Esophagus muscularis mucosa (tissue), 4 donors: ENCODE measurements at regions of chr18 and their contacts with region 1.

Region 1: DNA sequence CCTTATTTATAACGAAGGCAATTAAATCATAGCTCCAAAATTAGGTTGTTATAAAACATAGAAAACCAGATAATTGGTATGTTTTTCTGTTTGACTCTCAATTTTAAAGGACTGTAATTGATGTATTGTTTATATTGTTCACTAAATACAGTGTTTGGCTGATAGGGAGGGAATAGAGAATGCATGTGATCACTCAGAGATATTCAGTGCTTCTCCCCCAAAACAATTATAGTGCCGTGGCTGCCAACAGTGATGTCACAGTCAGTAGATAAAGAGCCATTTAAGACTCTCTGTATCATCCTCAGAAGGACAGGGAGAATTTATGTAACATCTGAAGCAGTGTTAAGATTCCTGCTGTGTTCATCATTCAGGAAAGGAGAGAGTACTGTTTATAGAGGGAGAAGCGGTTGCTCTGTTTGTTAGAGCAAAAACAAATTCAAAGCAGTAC is 69.6 kb downstream of the PHLPP1 start:
- DNase-seq: no peak
- H3K4me3 ChIP-seq: peak overlapping the region in 1 of 4 donors; percentile 5
- H3K27ac ChIP-seq: peak overlapping the region; percentile 52 to 64 (median 58)
- H3K4me1 ChIP-seq: peaks cover 3 to 82% (median 61%) of the 10 kb centered on the region in 4 donors
- H3K27me3 ChIP-seq: no peaks in the 10 kb centered on the region
- CTCF ChIP-seq: no peak
- EP300 ChIP-seq: no peak
- POLR2A ChIP-seq: no peak

Region 2: GRCh38 chr18:62545098-62545497 is 239.9 kb before region 1 on chr18:
- intact Hi-C with region 1: no loop called
- DNase-seq: no peak
- H3K4me3 ChIP-seq: no peak overlapping the region
- H3K27ac ChIP-seq: no peak overlapping the region
- H3K4me1 ChIP-seq: peaks cover 0 to under 1% (median 0%) of the 10 kb centered on the region in 4 donors
- H3K27me3 ChIP-seq: no peaks in the 10 kb centered on the region
- CTCF ChIP-seq: no peak
- EP300 ChIP-seq: no peak
- POLR2A ChIP-seq: no peak

Region 3: DNA sequence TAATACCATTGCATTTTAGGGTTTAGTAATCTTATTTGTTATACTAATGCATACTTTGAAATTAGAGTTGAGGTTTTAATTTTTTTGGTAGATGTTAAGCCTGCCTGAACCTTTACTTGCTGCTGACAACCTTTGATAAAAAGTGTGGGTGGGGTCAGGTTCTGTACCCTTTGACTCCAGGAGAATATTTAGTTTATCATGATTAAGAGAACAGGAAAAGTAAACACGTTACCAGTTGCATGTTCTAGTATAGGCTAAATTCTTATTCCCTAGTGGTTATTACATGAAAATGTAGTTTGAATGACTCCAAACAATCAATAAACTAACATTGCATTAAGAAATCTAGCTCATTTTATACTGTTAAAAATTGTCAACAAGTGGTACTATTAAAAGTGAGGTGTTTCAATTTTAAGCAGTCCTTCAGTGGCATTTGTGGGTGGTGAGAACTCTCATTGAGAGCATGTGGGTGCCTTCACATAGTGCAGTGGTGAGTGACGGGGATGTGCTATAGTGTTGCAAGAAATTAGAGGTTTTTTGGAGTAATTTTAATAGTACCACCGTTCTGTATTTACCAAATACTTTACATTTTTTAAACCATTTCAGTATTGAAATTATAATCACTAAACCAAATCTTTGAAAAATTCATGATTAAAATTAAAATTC is 39.8 kb before region 1 on chr18:
- intact Hi-C with region 1: loop called (anchors 5 kb)
- DNase-seq: no peak
- H3K4me3 ChIP-seq: no peak overlapping the region
- H3K27ac ChIP-seq: no peak overlapping the region
- H3K4me1 ChIP-seq: peaks cover 11 to 40% (median 37%) of the 10 kb centered on the region in 4 donors
- H3K27me3 ChIP-seq: no peaks in the 10 kb centered on the region
- CTCF ChIP-seq: no peak
- EP300 ChIP-seq: no peak
- POLR2A ChIP-seq: no peak